Caco-2 (cell line): ENCODE measurements at regions of chr2 and their contacts with region 1.

Region 1: DNA sequence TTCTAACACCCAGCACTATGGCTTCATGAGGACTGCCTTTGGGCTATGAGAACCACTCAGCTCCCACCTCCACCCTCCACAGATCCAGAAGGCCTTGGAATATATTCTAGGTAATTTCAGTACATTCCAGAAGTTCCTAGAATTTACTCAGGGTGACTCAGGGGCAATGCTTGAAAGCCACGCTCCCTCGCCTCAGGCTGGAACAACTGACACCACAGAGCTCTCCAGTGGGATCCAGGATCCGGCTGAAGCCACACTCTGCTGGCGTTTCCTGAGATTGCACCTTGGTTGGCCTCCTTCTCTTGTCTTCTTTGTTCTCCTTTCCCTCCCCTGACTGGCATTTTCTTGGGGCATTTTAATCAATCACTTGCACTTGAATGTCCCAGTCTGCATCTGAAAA is 92.7 kb upstream of the KCNE4 start:
- DNase-seq: peak; percentile 81 to 90
- H3K4me3 ChIP-seq: no peak overlapping the region
- H3K4me3 Mint-ChIP-seq: no peak overlapping the region
- H3K27ac Mint-ChIP-seq: peak overlapping the region; percentile 49
- H3K4me1 ChIP-seq: peaks cover 25% of the 10 kb centered on the region
- H3K4me1 Mint-ChIP-seq: peaks cover 20% of the 10 kb centered on the region
- H3K27me3 ChIP-seq: no peaks in the 10 kb centered on the region
- H3K27me3 Mint-ChIP-seq: no peaks in the 10 kb centered on the region
- CTCF ChIP-seq: peak; percentile 38 to 44

Region 2: DNA sequence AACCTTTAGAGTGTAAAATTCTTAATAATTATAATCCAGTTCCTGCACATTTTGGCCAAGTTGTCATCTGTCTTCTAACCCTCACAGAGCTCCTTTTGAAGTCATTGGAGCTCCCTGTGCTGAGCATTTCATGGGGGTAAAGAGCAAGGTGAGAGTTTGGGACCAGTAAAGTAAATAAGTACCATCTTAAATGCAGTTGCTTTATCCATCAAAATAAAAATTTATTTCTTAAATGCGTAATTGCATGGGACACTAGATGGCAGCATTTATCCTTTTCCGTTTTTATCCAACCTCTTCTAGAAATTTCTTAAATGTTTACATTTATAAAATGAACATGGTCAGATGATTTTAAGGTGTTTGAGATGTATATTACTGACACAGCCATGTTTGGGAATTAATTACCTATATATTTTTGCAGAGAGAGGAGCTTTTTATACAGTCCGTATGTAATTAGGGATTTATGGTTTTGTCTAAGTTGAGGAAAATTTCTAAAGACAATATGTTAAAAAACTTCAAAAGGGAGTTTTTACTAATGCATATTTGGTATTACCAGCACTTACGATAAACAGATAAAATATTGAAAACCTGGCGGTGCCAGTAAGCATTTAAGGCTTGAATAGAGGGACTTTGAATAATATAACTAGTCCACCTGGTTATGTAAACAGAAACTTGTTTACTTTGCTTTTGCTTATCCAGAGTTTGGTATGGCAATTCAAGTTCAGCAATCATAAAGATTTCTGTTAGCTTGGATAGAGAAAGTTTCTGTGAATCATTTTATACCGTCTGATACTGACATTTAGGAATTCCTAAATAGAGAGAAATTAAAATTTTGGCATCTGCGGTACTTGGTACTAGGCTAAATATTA is 44.0 kb before region 1 on chr2:
- CTCF ChIA-PET with region 1: no interaction called
- POLR2A ChIA-PET with region 1: no interaction called
- intact Hi-C with region 1: loop called (anchors 1 kb)
- DNase-seq: no peak
- H3K4me3 ChIP-seq: no peak overlapping the region
- H3K4me3 Mint-ChIP-seq: no peak overlapping the region
- H3K27ac Mint-ChIP-seq: no peak overlapping the region
- H3K4me1 ChIP-seq: peaks cover 27% of the 10 kb centered on the region
- H3K4me1 Mint-ChIP-seq: peaks cover 7% of the 10 kb centered on the region
- H3K27me3 ChIP-seq: no peaks in the 10 kb centered on the region
- H3K27me3 Mint-ChIP-seq: no peaks in the 10 kb centered on the region
- CTCF ChIP-seq: peak; percentile 40 to 67